Dorsolateral prefrontal cortex (tissue), 120 donors: ENCODE measurements at regions of chr11 and their contacts with region 1.

Region 1: DNA sequence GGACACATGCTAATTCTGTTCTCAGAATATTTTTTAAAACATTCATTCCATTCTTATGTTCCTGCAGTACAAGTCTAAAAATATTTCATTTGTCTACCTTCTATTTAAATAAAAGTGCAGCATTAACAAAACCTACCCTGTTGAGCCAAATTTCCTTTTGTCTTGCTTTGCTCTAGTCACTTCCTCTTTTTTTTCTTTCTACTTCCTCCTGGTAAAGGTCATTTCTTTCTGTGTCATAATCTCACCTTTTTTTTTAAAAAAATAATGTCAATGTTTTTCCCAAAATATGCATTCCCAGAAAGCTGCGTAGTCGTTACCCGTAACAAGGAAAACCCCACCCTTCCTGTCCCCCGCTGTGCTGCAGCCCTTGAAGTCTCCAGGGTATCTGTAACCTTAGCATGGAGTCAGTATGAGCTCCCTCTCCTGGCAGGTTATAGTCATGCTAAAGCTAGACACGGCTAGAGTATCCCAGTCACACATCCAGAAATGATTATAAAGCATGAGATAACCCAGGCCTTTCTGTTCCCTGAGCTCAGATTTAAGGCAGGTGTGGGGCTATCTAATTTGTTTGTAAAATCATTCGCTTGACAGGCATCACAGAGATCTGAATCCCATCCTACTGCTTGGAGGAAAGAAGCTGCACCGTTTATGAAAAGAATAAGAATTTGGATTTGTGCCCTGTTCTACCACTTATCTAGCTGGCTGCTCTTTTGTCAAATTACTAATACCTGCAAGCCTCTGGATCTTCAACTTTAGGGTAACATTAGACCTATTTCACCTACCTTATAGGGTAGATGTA is 51.1 kb upstream of the EED start:
- DNase-seq: peak in 7 of 10 donors; percentile 25 to 67 (median 41)
- H3K4me3 ChIP-seq: peak overlapping the region in 43 of 59 donors; percentile 2 to 59 (median 29)
- H3K27ac ChIP-seq: peak overlapping the region in 52 of 59 donors; percentile 4 to 80 (median 66)
- H3K27me3 ChIP-seq: no peaks in the 10 kb centered on the region
- CTCF ChIP-seq: peak in 55 of 56 donors; percentile 48 to 85 (median 74)

Region 2: GRCh38 chr11:86156381-86156955 is 37.0 kb before region 1 on chr11:
- intact Hi-C with region 1: loop called in 1 of 2 experiments (anchors 5 kb)
- DNase-seq: no peak
- H3K4me3 ChIP-seq: no peak overlapping the region
- H3K27ac ChIP-seq: peak overlapping the region in 46 of 59 donors; percentile 0 to 98 (median 57)
- H3K27me3 ChIP-seq: no peaks in the 10 kb centered on the region
- CTCF ChIP-seq: no peak

Region 3: GRCh38 chr11:86230921-86231430 is 37.5 kb after region 1 on chr11:
- intact Hi-C with region 1: no loop called
- DNase-seq: no peak
- H3K4me3 ChIP-seq: no peak overlapping the region
- H3K27ac ChIP-seq: peak overlapping the region in 8 of 59 donors; percentile 0 to 64 (median 17)
- H3K27me3 ChIP-seq: no peaks in the 10 kb centered on the region
- CTCF ChIP-seq: no peak